ENCODE measurements at regions of chr2 and their contacts with region 1.

Region 1: GRCh38 chr2:197209742-197210408 is 100.7 kb downstream of the ANKRD44 start:
- DNase-seq: peak; percentile 87
- H3K4me3 Mint-ChIP-seq: peak overlapping the region; percentile 68
- H3K27ac Mint-ChIP-seq: peak overlapping the region; percentile 97
- H3K4me1 Mint-ChIP-seq: peaks cover 93% of the 10 kb centered on the region
- H3K27me3 Mint-ChIP-seq: no peaks in the 10 kb centered on the region

Region 2: DNA sequence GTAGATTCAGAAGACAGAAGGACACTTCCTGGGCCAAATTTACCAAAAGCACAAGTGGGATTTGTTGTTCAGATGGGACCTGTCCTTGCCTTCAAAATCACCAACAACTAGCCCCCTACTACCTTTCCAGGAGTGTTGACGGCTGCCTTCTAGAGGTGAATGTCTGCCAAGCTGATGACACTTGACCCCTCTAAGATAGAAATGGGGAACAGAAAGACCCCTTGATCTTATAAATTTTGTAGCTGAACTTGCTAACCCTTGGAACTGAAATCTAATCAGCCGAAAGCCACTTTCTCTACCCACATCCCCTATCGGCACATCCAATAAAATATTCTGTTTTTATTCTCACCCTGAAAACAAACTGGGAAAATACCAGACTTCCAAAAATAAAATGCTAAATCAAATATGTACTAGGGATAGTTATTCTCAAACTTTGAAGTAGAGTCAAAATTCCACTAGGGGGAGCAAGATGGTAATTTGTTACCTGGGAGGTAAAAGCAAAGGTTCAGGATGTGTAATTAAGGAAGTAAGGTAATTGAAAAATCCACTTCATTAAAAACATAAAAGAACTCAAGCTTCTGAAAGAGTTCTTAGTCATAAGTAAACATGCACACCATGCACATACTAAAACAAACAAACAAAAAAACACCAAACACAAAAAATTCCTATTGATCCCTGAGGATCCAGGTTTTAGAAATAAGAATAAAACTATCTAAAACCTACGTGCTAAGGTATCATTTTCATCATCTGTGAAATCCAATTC is 18.5 kb before region 1 on chr2:
- intact Hi-C with region 1: loop called (anchors 2 kb)
- DNase-seq: peak; percentile 73
- H3K4me3 Mint-ChIP-seq: no peak overlapping the region
- H3K27ac Mint-ChIP-seq: peak overlapping the region; percentile 69
- H3K4me1 Mint-ChIP-seq: peaks cover 68% of the 10 kb centered on the region
- H3K27me3 Mint-ChIP-seq: no peaks in the 10 kb centered on the region

Region 3: GRCh38 chr2:197255543-197255942 is 45.7 kb after region 1 on chr2:
- intact Hi-C with region 1: loop called (anchors 1 kb)
- DNase-seq: peak; percentile 94
- H3K4me3 Mint-ChIP-seq: peak overlapping the region; percentile 81
- H3K27ac Mint-ChIP-seq: peak overlapping the region; percentile 96
- H3K4me1 Mint-ChIP-seq: peaks cover 60% of the 10 kb centered on the region
- H3K27me3 Mint-ChIP-seq: no peaks in the 10 kb centered on the region

Measured in activated CD4-positive, alpha-beta T cell treated with anti-CD3 and anti-CD28 coated beads, Interleukin-2, amount 10 ng/mL, durations not matched to agents 24 days and 14 days (primary cell).